Caco-2 (cell line): ENCODE measurements at regions of chr6 and their contacts with region 1.

Region 1: DNA sequence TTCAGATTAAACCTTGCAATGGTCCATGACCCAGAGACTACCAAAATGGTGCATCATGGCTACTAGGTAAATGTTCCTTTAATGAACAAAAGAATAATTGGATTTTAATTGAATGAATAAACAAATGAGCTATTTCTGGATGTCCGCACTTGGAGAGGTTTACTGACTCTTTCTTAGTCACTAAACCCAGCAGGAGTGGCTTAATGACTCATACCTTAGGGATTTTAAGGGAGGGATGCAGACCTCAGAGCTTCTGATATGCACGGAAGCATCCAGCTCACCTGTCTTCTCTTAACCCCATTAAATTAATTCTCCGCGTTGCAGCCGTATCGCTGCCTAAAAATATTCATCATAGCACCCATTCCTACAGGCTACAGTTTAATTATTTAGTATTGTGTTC is 970.0 kb upstream of the SLC35B3 start:
- DNase-seq: no peak
- H3K4me3 ChIP-seq: no peak overlapping the region
- H3K4me3 Mint-ChIP-seq: no peak overlapping the region
- H3K27ac Mint-ChIP-seq: no peak overlapping the region
- H3K4me1 ChIP-seq: peaks cover 27% of the 10 kb centered on the region
- H3K4me1 Mint-ChIP-seq: peaks cover 21% of the 10 kb centered on the region
- H3K27me3 ChIP-seq: no peaks in the 10 kb centered on the region
- H3K27me3 Mint-ChIP-seq: no peaks in the 10 kb centered on the region
- CTCF ChIP-seq: no peak

Region 2: GRCh38 chr6:8810325-8810724 is 595.0 kb before region 1 on chr6:
- CTCF ChIA-PET with region 1: no interaction called
- POLR2A ChIA-PET with region 1: no interaction called
- intact Hi-C with region 1: no loop called
- DNase-seq: no peak
- H3K4me3 ChIP-seq: no peak overlapping the region
- H3K4me3 Mint-ChIP-seq: no peak overlapping the region
- H3K27ac Mint-ChIP-seq: no peak overlapping the region
- H3K4me1 ChIP-seq: peaks cover 5% of the 10 kb centered on the region; the same call in 1 of the 2 replicates
- H3K4me1 Mint-ChIP-seq: no peaks in the 10 kb centered on the region
- H3K27me3 ChIP-seq: no peaks in the 10 kb centered on the region
- H3K27me3 Mint-ChIP-seq: no peaks in the 10 kb centered on the region
- CTCF ChIP-seq: no peak

Region 3: GRCh38 chr6:9308284-9308683 is 97.1 kb before region 1 on chr6:
- CTCF ChIA-PET with region 1: no interaction called
- POLR2A ChIA-PET with region 1: no interaction called
- intact Hi-C with region 1: loop called (anchors 2 kb)
- DNase-seq: peak in 1 of 2 experiments; percentile 55
- H3K4me3 ChIP-seq: no peak overlapping the region
- H3K4me3 Mint-ChIP-seq: no peak overlapping the region
- H3K27ac Mint-ChIP-seq: peak overlapping the region; percentile 57
- H3K4me1 ChIP-seq: peaks cover 22% of the 10 kb centered on the region
- H3K4me1 Mint-ChIP-seq: peaks cover 7% of the 10 kb centered on the region
- H3K27me3 ChIP-seq: no peaks in the 10 kb centered on the region
- H3K27me3 Mint-ChIP-seq: no peaks in the 10 kb centered on the region
- CTCF ChIP-seq: no peak

Region 4: GRCh38 chr6:9455864-9456658 is 50.7 kb after region 1 on chr6:
- CTCF ChIA-PET with region 1: no interaction called
- POLR2A ChIA-PET with region 1: no interaction called
- intact Hi-C with region 1: no loop called
- DNase-seq: no peak
- H3K4me3 ChIP-seq: no peak overlapping the region
- H3K4me3 Mint-ChIP-seq: no peak overlapping the region
- H3K27ac Mint-ChIP-seq: no peak overlapping the region
- H3K4me1 ChIP-seq: no peaks in the 10 kb centered on the region
- H3K4me1 Mint-ChIP-seq: no peaks in the 10 kb centered on the region
- H3K27me3 ChIP-seq: no peaks in the 10 kb centered on the region
- H3K27me3 Mint-ChIP-seq: no peaks in the 10 kb centered on the region
- CTCF ChIP-seq: no peak